Mammary epithelial cell (primary cell): ENCODE measurements at regions of chr3 and their contacts with region 1.

Region 1: DNA sequence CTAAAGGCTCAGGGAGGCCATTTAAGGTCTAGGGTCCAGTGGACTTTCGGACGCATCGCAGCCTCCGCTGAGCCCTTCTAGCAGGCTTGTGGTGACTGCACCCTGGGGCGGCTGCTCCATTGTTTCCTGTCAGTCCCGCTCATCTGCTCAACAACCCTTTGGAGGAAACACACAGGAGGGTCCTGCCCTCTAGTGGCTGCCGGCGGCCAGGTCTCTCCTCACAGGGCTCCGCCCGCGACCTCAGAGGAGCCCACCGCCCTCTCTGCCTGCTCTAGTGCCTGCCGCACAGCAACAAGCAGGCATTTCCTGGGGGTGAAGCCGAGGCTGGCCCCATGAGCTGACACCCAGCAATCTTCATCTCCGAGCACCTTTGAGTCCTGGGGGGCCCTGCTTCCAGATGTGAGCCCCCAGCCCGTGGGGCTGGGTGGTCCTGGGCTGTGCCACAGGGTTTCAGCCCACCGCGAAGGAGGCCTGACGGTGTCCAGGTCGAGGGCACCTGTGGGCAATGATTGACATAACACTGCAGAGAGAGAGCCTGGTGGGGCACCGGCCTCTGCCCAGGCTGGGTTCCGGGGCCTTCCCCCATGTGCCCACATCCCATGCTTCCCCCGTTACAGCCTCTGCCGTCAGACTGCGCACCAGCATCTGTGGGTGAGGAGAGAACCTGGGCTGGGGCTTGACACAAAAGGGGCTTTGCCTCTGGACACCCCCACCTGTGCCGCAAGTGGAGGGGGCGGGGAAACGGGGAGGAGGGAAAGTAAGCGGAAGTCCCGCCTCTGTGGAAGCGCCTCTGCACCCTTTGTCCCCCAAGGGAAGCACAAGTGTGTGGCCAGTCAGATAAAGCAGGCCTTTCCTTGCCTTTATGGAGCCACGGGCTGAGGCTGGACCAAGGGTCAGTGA is 27.0 kb upstream of the SFMBT1 start:
- DNase-seq: peak; percentile 59
- H3K4me3 ChIP-seq: peak overlapping the region; percentile 44 to 67 (median 62)
- H3K27ac ChIP-seq: no peak overlapping the region
- H3K4me1 ChIP-seq: peaks cover 19% of the 10 kb centered on the region
- H3K27me3 ChIP-seq: no peaks in the 10 kb centered on the region
- CTCF ChIP-seq: peak; percentile 79 to 94

Region 2: DNA sequence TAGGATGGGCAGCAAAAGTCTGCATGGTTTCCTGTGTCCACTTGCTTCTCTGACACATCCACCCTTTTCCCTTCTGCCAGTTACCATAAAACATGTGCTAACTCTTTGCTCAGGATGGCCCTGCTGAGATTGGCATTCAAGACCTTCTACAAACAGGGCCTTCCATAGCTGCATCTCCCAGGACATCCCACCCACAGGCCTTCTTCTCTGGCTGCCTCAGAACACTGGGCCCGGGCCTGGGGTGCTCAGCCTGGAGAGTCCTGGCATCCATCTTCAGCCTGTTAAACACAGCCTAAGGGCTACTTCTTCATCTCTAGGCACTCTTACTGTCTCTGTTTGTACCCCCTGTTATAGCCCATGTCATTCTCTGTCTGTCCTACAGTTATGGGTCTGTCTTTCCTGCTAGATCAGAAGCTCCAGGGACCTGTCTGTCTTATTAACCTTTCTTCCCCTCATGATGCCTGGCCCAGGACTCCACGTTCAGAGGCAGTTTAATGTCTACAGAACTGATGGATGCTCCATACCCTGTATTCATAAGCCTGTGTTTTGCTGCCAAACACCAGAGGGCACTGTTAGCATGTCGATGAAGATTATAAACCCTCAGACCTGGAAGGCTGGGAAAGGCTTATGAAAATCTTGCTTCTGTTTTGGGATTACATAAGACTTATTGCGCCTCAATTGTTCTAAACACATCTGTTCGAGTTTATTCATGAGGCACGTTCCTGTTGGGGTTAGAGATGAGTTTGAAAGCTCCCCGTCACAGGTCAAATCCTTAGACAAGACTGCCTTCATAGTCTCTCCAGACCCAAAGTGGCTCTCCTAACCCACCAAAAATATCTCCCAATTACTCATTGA is 644.5 kb before region 1 on chr3:
- CTCF ChIA-PET with region 1: no interaction called
- dilution Hi-C with region 1: no loop called
- in situ Hi-C with region 1: no loop called
- intact Hi-C with region 1: loop called (anchors 5 kb)
- DNase-seq: peak; percentile 60
- H3K4me3 ChIP-seq: no peak overlapping the region
- H3K27ac ChIP-seq: no peak overlapping the region
- H3K4me1 ChIP-seq: no peaks in the 10 kb centered on the region
- H3K27me3 ChIP-seq: no peaks in the 10 kb centered on the region
- CTCF ChIP-seq: peak; percentile 81 to 94

Region 3: GRCh38 chr3:52742418-52743041 is 330.4 kb before region 1 on chr3:
- CTCF ChIA-PET with region 1: no interaction called
- dilution Hi-C with region 1: no loop called
- in situ Hi-C with region 1: loop called in 1 of 2 experiments (anchors 25 kb)
- intact Hi-C with region 1: loop called (anchors 1 kb)
- DNase-seq: peak; percentile 14
- H3K4me3 ChIP-seq: no peak overlapping the region
- H3K27ac ChIP-seq: no peak overlapping the region
- H3K4me1 ChIP-seq: no peaks in the 10 kb centered on the region
- H3K27me3 ChIP-seq: no peaks in the 10 kb centered on the region
- CTCF ChIP-seq: peak; percentile 56 to 65

Region 4: DNA sequence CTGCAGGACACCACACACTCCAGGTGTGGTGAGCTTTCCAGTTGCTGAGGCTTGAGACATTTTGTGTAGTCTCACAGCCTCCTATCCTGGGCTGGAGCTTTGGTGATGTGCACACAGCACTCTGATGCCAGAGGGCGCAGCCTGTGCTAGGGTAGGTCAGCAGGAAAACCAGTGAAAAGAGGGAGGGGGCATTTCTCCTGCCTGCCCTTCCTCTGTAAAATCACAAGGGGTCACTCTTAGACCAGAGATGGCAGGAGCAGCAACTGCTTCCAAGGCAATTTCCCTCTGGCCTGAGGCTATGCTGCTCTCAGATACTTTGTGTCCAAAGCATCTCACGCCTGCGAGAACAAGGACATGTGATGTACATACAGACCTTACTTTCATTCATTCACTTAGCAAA is 221.6 kb before region 1 on chr3:
- CTCF ChIA-PET with region 1: no interaction called
- dilution Hi-C with region 1: no loop called
- in situ Hi-C with region 1: loop called in 1 of 2 experiments (anchors 10 kb)
- intact Hi-C with region 1: loop called (anchors 1 kb)
- DNase-seq: peak; percentile 12
- H3K4me3 ChIP-seq: no peak overlapping the region
- H3K27ac ChIP-seq: no peak overlapping the region
- H3K4me1 ChIP-seq: no peaks in the 10 kb centered on the region
- H3K27me3 ChIP-seq: no peaks in the 10 kb centered on the region
- CTCF ChIP-seq: peak; percentile 35 to 64

Region 5: DNA sequence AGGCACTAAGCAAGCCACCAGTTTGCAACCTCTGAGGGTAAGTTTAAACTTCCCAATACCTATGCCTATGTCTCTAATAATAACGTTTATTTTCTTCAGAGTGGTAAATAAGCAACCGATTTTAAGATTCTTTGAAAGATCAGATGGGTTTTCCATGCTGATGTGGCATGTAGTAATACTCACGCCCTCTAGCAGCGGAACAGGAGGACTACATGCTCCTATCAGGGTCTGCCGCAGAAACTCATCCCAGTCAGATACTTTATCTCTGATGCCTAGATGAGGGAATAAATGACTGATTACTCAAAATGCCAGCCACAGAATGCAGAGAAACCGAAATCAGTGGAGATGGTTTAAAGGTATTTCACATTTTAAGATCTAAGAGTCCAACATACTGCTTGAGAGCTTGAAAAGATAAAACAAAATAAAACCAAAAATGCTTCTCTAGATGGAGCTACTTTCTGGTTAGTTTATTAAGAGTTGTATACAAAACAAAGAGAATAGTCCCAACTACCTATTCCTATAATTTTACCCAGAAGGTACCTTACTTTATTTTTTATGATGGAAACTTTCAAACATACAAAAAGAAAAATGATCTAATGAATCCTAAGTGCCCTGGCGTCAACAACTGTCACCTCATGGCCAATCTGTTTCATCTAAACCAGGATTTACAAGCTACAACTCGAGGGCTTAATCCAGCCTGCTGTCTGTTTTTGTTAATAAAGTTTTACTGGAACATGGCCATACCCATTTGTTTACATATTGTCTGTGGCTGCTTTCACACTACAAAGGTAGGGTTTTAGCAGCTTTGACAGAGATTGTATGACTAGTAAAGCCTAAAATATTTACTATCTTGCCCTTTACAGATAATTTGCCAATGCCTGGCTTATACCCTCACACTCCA is 138.0 kb before region 1 on chr3:
- CTCF ChIA-PET with region 1: no interaction called
- dilution Hi-C with region 1: no loop called
- in situ Hi-C with region 1: no loop called
- intact Hi-C with region 1: loop called (anchors 1 kb)
- DNase-seq: peak; percentile 24
- H3K4me3 ChIP-seq: no peak overlapping the region
- H3K27ac ChIP-seq: no peak overlapping the region
- H3K4me1 ChIP-seq: no peaks in the 10 kb centered on the region
- H3K27me3 ChIP-seq: no peaks in the 10 kb centered on the region
- CTCF ChIP-seq: peak; percentile 83 to 87

Region 6: DNA sequence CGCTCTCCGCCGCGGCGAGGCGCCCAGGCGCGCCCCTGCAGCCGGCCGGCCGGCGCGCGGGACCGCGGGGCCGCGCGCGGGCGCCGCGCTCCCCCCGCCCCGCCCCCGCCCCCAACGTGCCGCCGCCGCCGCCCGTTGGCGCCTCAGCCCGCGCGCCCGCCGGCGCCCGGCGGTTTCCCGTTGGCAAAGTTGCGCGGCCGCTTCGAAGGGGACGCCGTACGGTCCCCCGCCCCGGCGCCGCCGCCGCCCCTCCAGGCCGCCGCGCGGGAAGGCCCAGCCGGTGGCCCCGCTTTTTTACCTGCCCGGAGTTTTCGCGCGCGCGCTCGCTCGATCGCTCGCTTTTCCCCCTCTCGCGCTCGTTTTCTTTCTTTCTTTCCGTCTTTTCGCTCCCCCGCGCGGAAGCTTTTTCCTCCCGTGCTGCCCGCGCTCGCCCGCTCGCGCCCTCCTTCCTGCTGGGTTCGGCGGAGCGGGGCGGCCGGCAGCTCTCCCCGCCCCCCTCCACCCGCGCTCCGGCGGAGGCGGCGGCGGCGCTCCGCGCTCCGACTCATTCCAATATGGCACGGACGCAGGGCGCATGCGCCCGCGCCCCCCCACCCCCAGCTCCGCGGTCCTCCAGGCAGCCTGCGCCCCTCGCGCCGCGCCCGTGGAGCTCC is 27.3 kb before region 1 on chr3 and contains the start of gene SFMBT1:
- CTCF ChIA-PET with region 1: no interaction called
- dilution Hi-C with region 1: no loop called
- in situ Hi-C with region 1: no loop called
- intact Hi-C with region 1: loop called (anchors 1 kb)
- DNase-seq: peak; percentile 62
- H3K4me3 ChIP-seq: peak within 1 kb of the TSS; percentile 78 to 89 (median 81)
- H3K27ac ChIP-seq: peak within 1 kb of the TSS; percentile 63
- H3K4me1 ChIP-seq: peaks cover 21% of the 10 kb centered on the region
- H3K27me3 ChIP-seq: no peaks in the 10 kb centered on the region
- CTCF ChIP-seq: no peak
- total RNA-seq, gene SFMBT1: 8.7 to 21.5 TPM